Activated CD8-positive, alpha-beta T cell treated with anti-CD3 and anti-CD28 coated beads for 36 hours (primary cell): ENCODE measurements at regions of chr2 and their contacts with region 1.

Region 1: DNA sequence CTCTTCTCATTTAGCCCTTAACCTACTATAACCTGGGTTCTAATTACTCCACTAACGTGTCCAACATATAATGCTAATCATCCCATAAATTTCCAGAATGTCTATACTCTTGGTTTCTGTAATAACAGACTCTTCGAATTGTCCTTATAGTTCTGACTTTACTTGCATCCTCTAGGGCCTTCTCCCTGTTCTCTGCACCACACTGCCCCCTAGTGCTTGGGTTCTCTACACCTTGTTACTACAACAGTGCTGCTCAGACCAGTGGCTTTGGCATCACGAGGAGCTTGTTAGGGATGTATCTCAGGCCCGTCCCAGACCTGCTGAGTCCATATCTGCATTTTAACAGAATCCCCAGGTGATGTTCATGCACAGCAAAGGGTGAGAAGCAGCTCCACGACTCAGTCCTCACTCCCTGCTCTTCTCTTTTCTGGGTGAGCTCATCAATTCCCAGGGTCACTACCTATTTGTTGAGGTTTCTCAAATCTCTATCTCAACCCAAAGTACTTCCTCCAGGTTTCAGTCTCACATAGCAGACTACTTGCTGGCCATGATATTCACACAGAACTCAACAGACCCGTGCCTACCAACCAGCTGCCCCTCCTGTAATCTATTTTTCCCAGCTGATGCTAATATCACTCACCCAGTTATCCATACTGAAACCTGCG is 14.5 kb upstream of the DDX1 start:
- DNase-seq: peak; percentile 97
- ATAC-seq: peak; percentile 100
- H3K4me3 Mint-ChIP-seq: no peak overlapping the region
- H3K27ac Mint-ChIP-seq: no peak overlapping the region
- H3K4me1 Mint-ChIP-seq: no peaks in the 10 kb centered on the region
- H3K27me3 Mint-ChIP-seq: peaks cover 5% of the 10 kb centered on the region
- CTCF ChIP-seq: peak; percentile 78

Region 2: GRCh38 chr2:15492773-15493325 is 84.4 kb before region 1 on chr2:
- CTCF ChIA-PET with region 1: no interaction called
- POLR2A ChIA-PET with region 1: no interaction called
- intact Hi-C with region 1: no loop called
- DNase-seq: no peak
- ATAC-seq: no peak
- H3K4me3 Mint-ChIP-seq: no peak overlapping the region
- H3K27ac Mint-ChIP-seq: no peak overlapping the region
- H3K4me1 Mint-ChIP-seq: peaks cover 6% of the 10 kb centered on the region
- H3K27me3 Mint-ChIP-seq: no peaks in the 10 kb centered on the region
- CTCF ChIP-seq: no peak

Region 3: DNA sequence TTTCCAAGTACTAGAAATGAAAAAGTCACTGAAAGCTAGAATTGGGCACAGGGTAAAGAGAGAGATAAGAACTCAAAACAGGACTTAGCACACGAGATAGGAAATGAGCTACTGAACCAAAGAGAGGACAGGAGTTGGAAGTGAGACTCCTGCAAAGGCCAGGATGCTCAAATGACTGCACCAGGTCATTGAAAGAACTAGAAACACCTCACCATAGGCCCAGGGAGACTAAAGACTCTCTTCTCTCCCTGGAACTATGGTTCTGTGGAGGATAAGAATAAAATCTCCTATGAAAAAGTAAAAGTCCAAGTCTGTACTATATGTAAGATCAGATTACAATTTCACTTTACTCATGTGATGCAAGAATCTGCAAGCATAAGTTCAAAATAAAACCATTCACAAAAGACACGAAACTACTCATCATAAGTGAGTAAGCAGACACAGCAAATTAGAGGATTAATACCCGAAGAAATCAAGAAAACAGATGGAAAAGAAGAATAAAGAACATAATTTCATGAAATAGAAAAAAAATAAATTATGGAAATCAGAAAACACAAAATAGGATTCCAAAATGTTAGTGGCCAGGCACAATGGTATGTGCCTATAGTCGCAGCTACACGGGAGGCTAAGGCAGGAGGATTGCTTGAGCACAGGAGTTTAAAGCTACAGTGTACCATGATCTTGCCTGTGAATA is 22.5 kb before region 1 on chr2:
- CTCF ChIA-PET with region 1: interaction called, 16 read pairs
- POLR2A ChIA-PET with region 1: no interaction called
- intact Hi-C with region 1: no loop called
- DNase-seq: no peak
- ATAC-seq: no peak
- H3K4me3 Mint-ChIP-seq: no peak overlapping the region
- H3K27ac Mint-ChIP-seq: peak overlapping the region; percentile 4
- H3K4me1 Mint-ChIP-seq: peaks cover 19% of the 10 kb centered on the region
- H3K27me3 Mint-ChIP-seq: no peaks in the 10 kb centered on the region
- CTCF ChIP-seq: no peak

Region 4: GRCh38 chr2:15560988-15561573 is 16.1 kb before region 1 on chr2 and contains the start of gene NBAS:
- CTCF ChIA-PET with region 1: interaction called, 25 read pairs
- POLR2A ChIA-PET with region 1: interaction called, 4 read pairs
- intact Hi-C with region 1: no loop called
- DNase-seq: peak; percentile 90
- ATAC-seq: peak; percentile 87
- H3K4me3 Mint-ChIP-seq: peak within 1 kb of the TSS; percentile 92
- H3K27ac Mint-ChIP-seq: peak within 1 kb of the TSS; percentile 90
- H3K4me1 Mint-ChIP-seq: peaks cover 26% of the 10 kb centered on the region
- H3K27me3 Mint-ChIP-seq: no peaks in the 10 kb centered on the region
- CTCF ChIP-seq: no peak
- total RNA-seq, gene NBAS: 40.9 to 41.9 TPM

Region 5: GRCh38 chr2:15591692-15592463 is 14.7 kb after region 1 on chr2 and contains the start of gene DDX1:
- CTCF ChIA-PET with region 1: interaction called, 33 read pairs
- POLR2A ChIA-PET with region 1: interaction called, 4 read pairs
- intact Hi-C with region 1: no loop called
- DNase-seq: peak; percentile 84
- ATAC-seq: peak; percentile 97
- H3K4me3 Mint-ChIP-seq: peak within 1 kb of the TSS; percentile 86
- H3K27ac Mint-ChIP-seq: peak within 1 kb of the TSS; percentile 93
- H3K4me1 Mint-ChIP-seq: peaks cover 36% of the 10 kb centered on the region
- H3K27me3 Mint-ChIP-seq: no peaks in the 10 kb centered on the region
- CTCF ChIP-seq: no peak
- total RNA-seq, gene DDX1: 90.3 to 92.5 TPM

Region 6: DNA sequence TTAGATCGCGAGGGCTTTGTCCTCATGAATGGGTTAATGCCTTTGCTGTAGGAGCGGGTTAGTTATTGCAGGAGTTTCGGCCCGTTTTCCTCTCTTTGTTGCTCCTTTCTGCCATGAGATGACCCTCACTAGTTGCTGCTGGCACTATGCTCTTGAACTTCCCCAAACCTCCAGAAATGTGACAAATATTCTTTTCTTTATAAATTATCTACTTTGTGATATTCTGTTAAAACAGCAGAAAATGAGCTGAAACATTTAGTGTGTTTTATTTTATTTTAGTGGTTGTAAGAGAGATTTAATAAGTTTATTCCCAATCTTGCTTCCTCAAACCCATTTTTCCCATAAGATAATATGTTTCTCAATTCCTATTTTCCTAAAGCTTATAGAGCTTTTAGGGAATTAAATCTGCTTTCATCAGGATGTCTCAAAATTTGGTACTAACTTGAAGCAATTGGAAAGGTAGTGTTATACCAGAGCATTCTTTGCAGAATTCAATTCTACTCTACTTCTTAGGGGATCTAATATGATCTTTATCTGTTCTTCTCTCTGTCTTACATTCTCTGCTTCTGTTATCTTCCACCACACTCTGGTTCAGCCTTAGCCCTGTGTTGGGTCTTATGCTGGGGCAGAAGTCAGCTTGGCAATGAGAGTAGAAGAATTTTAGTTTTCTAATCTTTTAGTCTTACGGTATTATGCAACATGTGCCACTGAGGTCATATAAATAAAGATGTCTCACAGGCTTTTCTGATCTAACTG is 37.5 kb after region 1 on chr2:
- CTCF ChIA-PET with region 1: interaction called, 10 read pairs
- POLR2A ChIA-PET with region 1: no interaction called
- intact Hi-C with region 1: no loop called
- DNase-seq: no peak
- ATAC-seq: no peak
- H3K4me3 Mint-ChIP-seq: no peak overlapping the region
- H3K27ac Mint-ChIP-seq: peak overlapping the region; percentile 38
- H3K4me1 Mint-ChIP-seq: peaks cover 3% of the 10 kb centered on the region
- H3K27me3 Mint-ChIP-seq: no peaks in the 10 kb centered on the region
- CTCF ChIP-seq: no peak

Region 7: GRCh38 chr2:15704086-15704787 is 127.0 kb after region 1 on chr2:
- CTCF ChIA-PET with region 1: no interaction called
- POLR2A ChIA-PET with region 1: no interaction called
- intact Hi-C with region 1: no loop called
- DNase-seq: no peak
- ATAC-seq: no peak
- H3K4me3 Mint-ChIP-seq: no peak overlapping the region
- H3K27ac Mint-ChIP-seq: no peak overlapping the region
- H3K4me1 Mint-ChIP-seq: no peaks in the 10 kb centered on the region
- H3K27me3 Mint-ChIP-seq: no peaks in the 10 kb centered on the region
- CTCF ChIP-seq: no peak